GM12878 (cell line): ENCODE measurements at regions of chr5 and their contacts with region 1.

Region 1: GRCh38 chr5:176985516-176985915 is 21.1 kb downstream of the UIMC1 start:
- DNase-seq: no peak
- ATAC-seq: peak; percentile 92
- H3K4me3 ChIP-seq: no peak overlapping the region
- H3K27ac ChIP-seq: no peak overlapping the region
- H3K4me1 ChIP-seq: no peaks in the 10 kb centered on the region
- H3K27me3 ChIP-seq: no peaks in the 10 kb centered on the region
- CTCF ChIP-seq: no peak
- EP300 ChIP-seq: no peak
- POLR2A ChIP-seq: no peak
- RAD21 ChIP-seq: no peak

Region 2: GRCh38 chr5:176619203-176619568 is 366.3 kb before region 1 on chr5:
- CTCF ChIA-PET with region 1: no interaction called
- POLR2A ChIA-PET with region 1: no interaction called
- RAD21 ChIA-PET with region 1: no interaction called
- SMC1A ChIA-PET with region 1: no interaction called
- in situ Hi-C with region 1: no loop called
- intact Hi-C with region 1: no loop called
- DNase-seq: no peak
- ATAC-seq: peak; percentile 98
- H3K4me3 ChIP-seq: no peak overlapping the region
- H3K27ac ChIP-seq: no peak overlapping the region
- H3K4me1 ChIP-seq: no peaks in the 10 kb centered on the region
- H3K27me3 ChIP-seq: peaks cover 4 to 7% of the 10 kb centered on the region in 2 experiments
- CTCF ChIP-seq: peak in 2 of 3 experiments; percentile 37 to 48; a peak in 4 of 6 replicates
- EP300 ChIP-seq: no peak
- POLR2A ChIP-seq: no peak
- RAD21 ChIP-seq: peak; percentile 28; the same call in 1 of the 2 replicates

Region 3: GRCh38 chr5:176965633-176966032 is 19.9 kb before region 1 on chr5:
- CTCF ChIA-PET with region 1: interaction called, 4 read pairs
- POLR2A ChIA-PET with region 1: no interaction called
- RAD21 ChIA-PET with region 1: no interaction called
- SMC1A ChIA-PET with region 1: interaction called, 11 read pairs
- in situ Hi-C with region 1: no loop called
- intact Hi-C with region 1: no loop called
- DNase-seq: no peak
- ATAC-seq: no peak
- H3K4me3 ChIP-seq: no peak overlapping the region
- H3K27ac ChIP-seq: no peak overlapping the region
- H3K4me1 ChIP-seq: no peaks in the 10 kb centered on the region
- H3K27me3 ChIP-seq: no peaks in the 10 kb centered on the region
- CTCF ChIP-seq: no peak
- EP300 ChIP-seq: no peak
- POLR2A ChIP-seq: no peak
- RAD21 ChIP-seq: no peak